ENCODE measurements at regions of chr12 and their contacts with region 1.

Region 1: GRCh38 chr12:122336015-122336946 is 70.0 kb upstream of the VPS33A start:
- DNase-seq: no peak
- ATAC-seq: no peak
- H3K4me3 Mint-ChIP-seq: no peak overlapping the region
- H3K27ac Mint-ChIP-seq: no peak overlapping the region
- H3K4me1 Mint-ChIP-seq: no peaks in the 10 kb centered on the region
- H3K27me3 Mint-ChIP-seq: no peaks in the 10 kb centered on the region
- CTCF ChIP-seq: peak; percentile 33

Region 2: DNA sequence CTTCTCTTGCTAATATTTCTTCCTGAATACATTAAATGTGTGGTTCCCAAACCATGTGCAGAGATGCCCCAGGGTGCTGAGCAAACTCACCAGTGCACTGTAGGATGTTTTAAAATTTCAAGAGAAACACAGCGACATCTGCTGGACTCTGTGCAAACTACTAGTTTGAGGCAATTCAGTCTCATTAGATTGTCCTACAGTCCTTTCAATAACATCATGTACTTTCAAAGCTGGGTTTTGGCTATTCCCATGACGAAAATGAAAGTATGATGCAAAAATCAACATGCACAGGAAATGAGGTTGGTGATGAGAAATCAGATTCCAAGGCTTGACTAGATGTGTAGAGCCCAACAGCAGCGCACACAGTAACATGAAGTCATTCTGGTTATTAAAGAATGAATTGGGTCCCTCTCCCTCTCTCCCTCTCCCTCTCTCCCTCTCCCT is 19.9 kb after region 1 on chr12:
- CTCF ChIA-PET with region 1: interaction called, 23 read pairs
- POLR2A ChIA-PET with region 1: no interaction called
- intact Hi-C with region 1: no loop called
- DNase-seq: no peak
- ATAC-seq: peak; percentile 77
- H3K4me3 Mint-ChIP-seq: no peak overlapping the region
- H3K27ac Mint-ChIP-seq: no peak overlapping the region
- H3K4me1 Mint-ChIP-seq: peaks cover 7% of the 10 kb centered on the region
- H3K27me3 Mint-ChIP-seq: no peaks in the 10 kb centered on the region
- CTCF ChIP-seq: peak; percentile 71

Region 3: GRCh38 chr12:122374707-122375106 is 38.4 kb after region 1 on chr12:
- CTCF ChIA-PET with region 1: no interaction called
- POLR2A ChIA-PET with region 1: no interaction called
- intact Hi-C with region 1: no loop called
- DNase-seq: no peak
- ATAC-seq: no peak
- H3K4me3 Mint-ChIP-seq: no peak overlapping the region
- H3K27ac Mint-ChIP-seq: no peak overlapping the region
- H3K4me1 Mint-ChIP-seq: peaks cover 9% of the 10 kb centered on the region
- H3K27me3 Mint-ChIP-seq: no peaks in the 10 kb centered on the region
- CTCF ChIP-seq: no peak

Region 4: GRCh38 chr12:122471324-122472226 is 135.3 kb after region 1 on chr12:
- CTCF ChIA-PET with region 1: interaction called, 10 read pairs
- POLR2A ChIA-PET with region 1: no interaction called
- intact Hi-C with region 1: loop called (anchors 1 kb)
- DNase-seq: no peak
- ATAC-seq: peak; percentile 70
- H3K4me3 Mint-ChIP-seq: no peak overlapping the region
- H3K27ac Mint-ChIP-seq: no peak overlapping the region
- H3K4me1 Mint-ChIP-seq: peaks cover 13% of the 10 kb centered on the region
- H3K27me3 Mint-ChIP-seq: no peaks in the 10 kb centered on the region
- CTCF ChIP-seq: peak; percentile 59

Region 5: DNA sequence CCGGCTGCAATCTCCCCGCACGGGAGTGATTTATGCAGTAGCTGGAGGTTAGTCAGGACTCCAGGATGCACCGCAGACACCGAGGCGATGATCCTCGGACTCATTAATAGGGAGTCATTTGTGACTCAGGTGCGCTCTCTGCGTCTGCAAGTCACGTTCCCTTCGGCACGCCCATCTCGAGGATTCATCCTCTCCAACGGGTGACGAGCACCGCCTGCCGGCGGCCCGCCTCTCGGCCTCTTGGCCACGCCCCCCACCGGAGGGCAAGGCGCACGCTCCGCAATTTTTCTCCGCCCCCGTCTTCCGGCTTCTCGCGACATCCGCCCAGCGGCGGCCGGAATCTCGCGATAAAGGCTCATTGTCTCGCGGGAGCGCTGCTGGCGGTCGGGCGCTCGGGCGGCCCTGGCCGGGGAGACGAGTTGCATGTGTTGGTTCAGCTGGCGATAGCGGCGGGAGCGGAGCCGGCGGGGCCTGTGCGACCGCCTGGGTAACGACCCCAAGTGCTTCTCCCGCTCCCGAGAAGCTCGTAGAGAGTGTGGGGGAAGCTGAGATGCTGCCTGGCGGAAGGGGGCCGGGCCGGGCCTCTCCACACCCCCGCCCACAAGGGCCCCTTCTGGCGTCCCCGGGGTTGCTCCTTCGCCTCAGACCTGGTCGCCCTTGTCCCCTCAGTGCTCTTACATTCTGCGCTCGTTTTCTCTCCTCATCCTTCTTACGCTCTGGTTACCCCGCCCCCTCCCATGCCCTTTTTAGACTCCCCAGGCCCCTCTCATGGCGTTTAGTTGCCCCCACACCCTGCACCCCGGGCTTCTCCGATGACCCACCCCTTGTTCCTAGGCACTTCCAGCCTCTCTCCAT is 416.4 kb after region 1 on chr12 and contains the start of gene DENR:
- CTCF ChIA-PET with region 1: no interaction called
- POLR2A ChIA-PET with region 1: no interaction called
- intact Hi-C with region 1: loop called (anchors 1 kb)
- DNase-seq: peak; percentile 99
- ATAC-seq: peak; percentile 92
- H3K4me3 Mint-ChIP-seq: peak within 1 kb of the TSS; percentile 91
- H3K27ac Mint-ChIP-seq: peak within 1 kb of the TSS; percentile 92
- H3K4me1 Mint-ChIP-seq: peaks cover 46% of the 10 kb centered on the region
- H3K27me3 Mint-ChIP-seq: no peaks in the 10 kb centered on the region
- CTCF ChIP-seq: no peak
- total RNA-seq, gene DENR: 50.5 and 53.3 TPM in 2 replicates